Naive thymus-derived CD4-positive, alpha-beta T cell (primary cell): ENCODE measurements at regions of chr4 and their contacts with region 1.

Region 1: GRCh38 chr4:54064295-54065111 is at the start of gene CHIC2:
- DNase-seq: peak; percentile 95 to 99 (median 98)
- ATAC-seq: peak; percentile 94
- H3K4me3 ChIP-seq: peak within 1 kb of the TSS; percentile 77
- H3K4me3 Mint-ChIP-seq: peak within 1 kb of the TSS; percentile 94 to 100 (median 97)
- H3K27ac ChIP-seq: peak within 1 kb of the TSS; percentile 100
- H3K27ac Mint-ChIP-seq: peak within 1 kb of the TSS; percentile 95 to 99 (median 98)
- H3K4me1 ChIP-seq: peaks cover 8 to 32% of the 10 kb centered on the region in 2 donors
- H3K4me1 Mint-ChIP-seq: peaks cover 39 to 59% (median 44%) of the 10 kb centered on the region in 7 donors
- H3K27me3 ChIP-seq: no peaks in the 10 kb centered on the region
- H3K27me3 Mint-ChIP-seq: peaks cover 0 to 2% (median 0%) of the 10 kb centered on the region in 5 donors
- total RNA-seq, gene CHIC2: 22.4 to 55.7 (median 40.7) TPM

Region 2: GRCh38 chr4:52721968-52722815 is 1342.3 kb before region 1 on chr4:
- CTCF ChIA-PET with region 1: no interaction called
- POLR2A ChIA-PET with region 1: no interaction called
- intact Hi-C with region 1: loop called in 1 of 2 experiments (anchors 1 kb)
- DNase-seq: peak; percentile 62 to 87 (median 81)
- ATAC-seq: peak; percentile 99
- H3K4me3 ChIP-seq: peak overlapping the region; percentile 83
- H3K4me3 Mint-ChIP-seq: peak overlapping the region; percentile 55 to 90 (median 79)
- H3K27ac ChIP-seq: peak overlapping the region; percentile 86
- H3K27ac Mint-ChIP-seq: peak overlapping the region; percentile 54 to 95 (median 86)
- H3K4me1 ChIP-seq: no peaks in the 10 kb centered on the region
- H3K4me1 Mint-ChIP-seq: peaks cover 5 to 14% (median 11%) of the 10 kb centered on the region in 7 donors
- H3K27me3 ChIP-seq: no peaks in the 10 kb centered on the region
- H3K27me3 Mint-ChIP-seq: peaks cover 0 to 11% (median 0%) of the 10 kb centered on the region in 5 donors

Region 3: GRCh38 chr4:53365486-53366300 is 698.8 kb before region 1 on chr4 and contains the start of gene SCFD2:
- CTCF ChIA-PET with region 1: no interaction called
- POLR2A ChIA-PET with region 1: no interaction called
- intact Hi-C with region 1: loop called (anchors 1 kb)
- DNase-seq: peak; percentile 86 to 97 (median 94)
- ATAC-seq: peak; percentile 99
- H3K4me3 ChIP-seq: peak within 1 kb of the TSS; percentile 72
- H3K4me3 Mint-ChIP-seq: peak within 1 kb of the TSS; percentile 92 to 99 (median 96)
- H3K27ac ChIP-seq: peak within 1 kb of the TSS; percentile 85
- H3K27ac Mint-ChIP-seq: peak within 1 kb of the TSS; percentile 95 to 99 (median 96)
- H3K4me1 ChIP-seq: peaks cover 7 to 23% of the 10 kb centered on the region in 2 donors
- H3K4me1 Mint-ChIP-seq: peaks cover 32 to 64% (median 50%) of the 10 kb centered on the region in 7 donors
- H3K27me3 ChIP-seq: no peaks in the 10 kb centered on the region
- H3K27me3 Mint-ChIP-seq: peaks cover 0 to 20% (median 3%) of the 10 kb centered on the region in 5 donors
- total RNA-seq, gene SCFD2: 13.4 to 32.8 (median 28.0) TPM

Region 4: GRCh38 chr4:54027311-54027710 is 37.2 kb before region 1 on chr4:
- CTCF ChIA-PET with region 1: no interaction called
- POLR2A ChIA-PET with region 1: no interaction called
- intact Hi-C with region 1: loop called in 1 of 2 experiments (anchors 5 kb)
- DNase-seq: no peak
- ATAC-seq: no peak
- H3K4me3 ChIP-seq: no peak overlapping the region
- H3K4me3 Mint-ChIP-seq: no peak overlapping the region
- H3K27ac ChIP-seq: no peak overlapping the region
- H3K27ac Mint-ChIP-seq: no peak overlapping the region
- H3K4me1 ChIP-seq: no peaks in the 10 kb centered on the region
- H3K4me1 Mint-ChIP-seq: peaks cover 2 to 33% (median 24%) of the 10 kb centered on the region in 7 donors
- H3K27me3 ChIP-seq: no peaks in the 10 kb centered on the region
- H3K27me3 Mint-ChIP-seq: no peaks in the 10 kb centered on the region

Region 5: GRCh38 chr4:54091637-54092404 is 27.3 kb after region 1 on chr4:
- CTCF ChIA-PET with region 1: interaction called, 4 read pairs
- POLR2A ChIA-PET with region 1: interaction called, 4 read pairs
- intact Hi-C with region 1: loop called (anchors 1 kb)
- DNase-seq: peak; percentile 72 to 89 (median 83)
- ATAC-seq: peak; percentile 91
- H3K4me3 ChIP-seq: peak overlapping the region; percentile 67
- H3K4me3 Mint-ChIP-seq: peak overlapping the region; percentile 87 to 97 (median 88)
- H3K27ac ChIP-seq: no peak overlapping the region
- H3K27ac Mint-ChIP-seq: peak overlapping the region in 7 of 9 donors; percentile 2 to 66 (median 29)
- H3K4me1 ChIP-seq: peaks cover 0 to 11% of the 10 kb centered on the region in 2 donors
- H3K4me1 Mint-ChIP-seq: peaks cover 18 to 36% (median 29%) of the 10 kb centered on the region in 7 donors
- H3K27me3 ChIP-seq: peaks cover 11 to 33% of the 10 kb centered on the region in 2 donors
- H3K27me3 Mint-ChIP-seq: peaks cover 56 to 83% (median 59%) of the 10 kb centered on the region in 5 donors

Region 6: DNA sequence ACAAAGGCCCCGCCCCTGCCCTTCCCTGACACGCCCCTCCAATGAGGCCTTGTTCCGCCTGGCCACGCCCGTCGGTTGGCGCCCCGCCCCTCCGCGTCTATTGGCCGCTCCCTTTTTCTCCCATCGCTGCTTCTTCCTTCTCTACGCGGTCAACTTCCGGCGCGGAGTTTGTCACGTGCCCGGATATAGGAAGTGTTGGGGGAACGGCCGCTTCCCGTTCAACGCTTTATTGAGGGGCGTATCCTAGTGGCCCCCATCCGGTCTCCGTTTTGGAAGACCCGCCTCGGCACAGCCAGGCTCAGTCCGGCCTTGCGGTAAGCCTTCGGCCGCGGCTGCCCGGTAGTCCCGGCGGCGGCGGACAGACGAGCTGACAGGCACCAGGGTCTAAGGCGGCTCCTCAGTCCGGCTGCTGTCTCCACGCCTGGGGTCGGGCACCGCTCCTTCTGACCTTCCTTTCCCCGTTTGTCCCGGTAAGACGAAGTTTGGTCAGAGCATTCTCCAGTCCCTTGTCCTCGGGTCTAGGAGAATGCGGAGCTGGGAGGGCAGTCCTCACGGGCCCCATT is 1789.1 kb after region 1 on chr4 and contains the start of gene EXOC1:
- CTCF ChIA-PET with region 1: no interaction called
- POLR2A ChIA-PET with region 1: no interaction called
- intact Hi-C with region 1: loop called (anchors 2 to 5 kb)
- DNase-seq: peak; percentile 93 to 98 (median 94)
- ATAC-seq: peak; percentile 99
- H3K4me3 ChIP-seq: peak within 1 kb of the TSS; percentile 84
- H3K4me3 Mint-ChIP-seq: peak within 1 kb of the TSS in 2 of 10 donors; percentile 34 to 69
- H3K27ac ChIP-seq: peak within 1 kb of the TSS; percentile 87
- H3K27ac Mint-ChIP-seq: peak within 1 kb of the TSS in 7 of 9 donors; percentile 75 to 94 (median 90)
- H3K4me1 ChIP-seq: peaks cover 26 to 31% of the 10 kb centered on the region in 2 donors
- H3K4me1 Mint-ChIP-seq: peaks cover 22 to 48% (median 42%) of the 10 kb centered on the region in 7 donors
- H3K27me3 ChIP-seq: no peaks in the 10 kb centered on the region
- H3K27me3 Mint-ChIP-seq: no peaks in the 10 kb centered on the region
- total RNA-seq, gene EXOC1: 20.3 to 46.7 (median 32.1) TPM